Activated CD4-positive, alpha-beta memory T cell treated with anti-CD3 and anti-CD28 coated beads for 36 hours (primary cell): ENCODE measurements at regions of chr12 and their contacts with region 1.

Region 1: DNA sequence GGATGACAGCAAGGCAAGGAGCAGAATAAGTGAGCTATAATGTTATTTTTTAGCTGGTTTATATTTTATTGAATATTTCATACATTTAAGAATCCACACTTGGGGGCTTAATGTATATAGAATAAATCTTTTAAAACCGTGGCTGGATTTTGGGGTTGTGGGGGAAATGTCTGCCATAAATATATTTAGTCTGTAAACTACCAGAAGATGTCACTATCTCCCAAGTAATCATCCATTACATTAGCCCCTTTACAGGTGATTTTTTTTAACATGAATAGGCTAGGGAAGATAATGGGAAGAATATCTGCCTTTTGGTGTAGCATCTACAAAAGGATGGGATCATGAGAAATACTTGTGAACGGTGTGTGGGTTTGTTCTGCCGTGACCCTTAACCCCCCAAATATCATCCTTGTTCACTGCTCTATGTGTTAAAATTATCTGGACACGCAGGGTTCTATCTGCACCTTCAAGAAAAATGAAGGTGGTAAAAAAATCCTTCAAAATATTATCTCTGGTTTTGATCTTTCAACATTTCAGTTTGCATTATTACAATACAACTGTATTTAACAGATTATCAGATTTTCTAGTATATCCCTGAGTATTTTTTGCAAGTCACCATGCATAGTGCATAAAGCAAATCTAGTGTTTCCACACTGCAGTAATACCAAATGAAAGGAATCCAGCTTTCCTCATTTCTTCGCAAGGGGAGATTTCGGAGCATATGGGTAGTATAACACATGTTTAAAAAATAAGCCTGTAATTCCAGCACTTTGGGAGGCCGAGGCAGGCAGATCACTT is 8.0 kb upstream of the SLC17A8 start:
- DNase-seq: no peak
- H3K4me3 Mint-ChIP-seq: no peak overlapping the region
- H3K27ac Mint-ChIP-seq: no peak overlapping the region
- H3K4me1 Mint-ChIP-seq: no peaks in the 10 kb centered on the region
- H3K27me3 Mint-ChIP-seq: peaks cover 4% of the 10 kb centered on the region

Region 2: DNA sequence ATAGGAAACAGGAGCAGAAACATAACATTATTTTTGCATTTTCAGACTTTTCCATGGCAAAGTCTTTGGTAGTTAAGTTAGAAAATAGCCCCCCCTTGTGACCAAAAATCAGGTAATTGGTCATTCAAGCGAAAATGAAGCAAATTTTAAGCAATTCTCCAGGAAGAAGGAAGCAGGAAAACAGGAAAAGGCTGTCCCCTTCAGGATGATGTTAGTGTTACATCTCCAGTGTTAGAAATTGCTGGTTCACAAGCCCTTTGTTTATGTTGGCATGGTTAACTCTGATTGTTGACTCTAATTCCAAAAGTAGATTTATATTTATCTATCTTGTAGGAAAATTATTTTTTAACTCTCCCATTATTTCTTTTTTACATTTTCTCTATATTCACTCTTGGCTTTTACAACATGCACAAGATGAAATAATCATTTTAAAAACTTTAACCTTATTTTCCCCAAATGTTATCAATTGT is 205.8 kb after region 1 on chr12:
- CTCF ChIA-PET with region 1: interaction called, 5 read pairs
- POLR2A ChIA-PET with region 1: no interaction called
- intact Hi-C with region 1: loop called (anchors 2 kb)
- DNase-seq: no peak
- H3K4me3 Mint-ChIP-seq: no peak overlapping the region
- H3K27ac Mint-ChIP-seq: no peak overlapping the region
- H3K4me1 Mint-ChIP-seq: no peaks in the 10 kb centered on the region
- H3K27me3 Mint-ChIP-seq: peaks cover 2% of the 10 kb centered on the region